Posterior cingulate gyrus (tissue), 11 donors: ENCODE measurements at regions of chr2 and their contacts with region 1.

Region 1: GRCh38 chr2:190511104-190511503 is 23.4 kb downstream of the NEMP2 start:
- DNase-seq: no peak

Region 2: GRCh38 chr2:190338453-190338852 is 172.7 kb before region 1 on chr2:
- intact Hi-C with region 1: loop called (anchors 2 kb)
- DNase-seq: no peak

Region 3: GRCh38 chr2:190382851-190383250 is 128.3 kb before region 1 on chr2:
- intact Hi-C with region 1: loop called (anchors 5 kb)
- DNase-seq: no peak